Mammary epithelial cell (primary cell): ENCODE measurements at regions of chr7 and their contacts with region 1.

Region 1: GRCh38 chr7:105230486-105230885 is 158.2 kb downstream of the SRPK2 start:
- DNase-seq: peak; percentile 70
- H3K4me3 ChIP-seq: peak overlapping the region in 1 of 3 experiments; percentile 15
- H3K27ac ChIP-seq: peak overlapping the region; percentile 92
- H3K4me1 ChIP-seq: peaks cover 38% of the 10 kb centered on the region
- H3K27me3 ChIP-seq: no peaks in the 10 kb centered on the region
- CTCF ChIP-seq: no peak

Region 2: GRCh38 chr7:105180002-105180401 is 50.5 kb before region 1 on chr7:
- CTCF ChIA-PET with region 1: interaction called, 3 read pairs
- dilution Hi-C with region 1: no loop called
- in situ Hi-C with region 1: loop called in 1 of 2 experiments (anchors 5 kb)
- intact Hi-C with region 1: loop called (anchors 1 kb)
- DNase-seq: no peak
- H3K4me3 ChIP-seq: no peak overlapping the region
- H3K27ac ChIP-seq: no peak overlapping the region
- H3K4me1 ChIP-seq: peaks cover 6% of the 10 kb centered on the region
- H3K27me3 ChIP-seq: no peaks in the 10 kb centered on the region
- CTCF ChIP-seq: no peak

Region 3: DNA sequence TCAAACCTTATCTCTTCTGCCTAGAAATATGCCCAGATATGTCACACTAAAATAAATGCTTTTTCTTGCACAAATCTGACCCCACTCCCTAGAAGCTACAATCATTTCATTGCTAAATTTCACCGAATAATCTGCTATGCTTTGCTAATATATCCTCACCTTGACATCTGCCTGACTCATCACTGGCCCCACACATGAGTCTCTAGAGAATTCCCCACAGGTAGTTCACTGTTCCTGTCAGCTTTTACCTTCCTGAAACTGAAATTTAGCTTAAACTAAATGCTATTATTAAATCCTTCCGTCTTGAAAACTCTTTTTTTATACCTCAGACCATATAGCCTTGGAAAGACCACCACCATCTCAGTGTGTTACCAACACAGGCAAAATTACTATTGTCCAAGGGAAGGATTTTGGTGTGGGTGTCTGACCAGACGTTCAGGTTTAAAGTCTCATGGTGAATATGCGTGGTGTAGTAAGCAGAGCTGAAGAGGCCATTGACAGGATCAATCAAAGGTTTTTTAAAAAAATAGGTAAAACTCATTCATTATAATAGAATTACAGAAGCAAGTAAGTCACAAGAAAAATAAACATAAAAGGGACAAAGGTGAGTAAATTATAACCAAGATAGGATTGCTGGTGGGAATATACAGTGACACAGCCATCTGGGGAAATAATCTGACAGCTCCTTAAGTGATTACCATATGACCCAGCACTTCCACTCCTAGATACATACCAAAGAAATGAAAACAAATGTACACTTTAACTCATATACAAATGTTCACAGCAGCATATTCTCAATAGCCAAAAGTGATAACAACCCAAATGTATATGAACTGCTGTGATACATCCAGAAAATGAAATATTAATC is 43.0 kb before region 1 on chr7:
- CTCF ChIA-PET with region 1: interaction called, 3 read pairs
- dilution Hi-C with region 1: no loop called
- in situ Hi-C with region 1: loop called in 1 of 2 experiments (anchors 5 kb)
- intact Hi-C with region 1: loop called (anchors 1 kb)
- DNase-seq: peak; percentile 72
- H3K4me3 ChIP-seq: no peak overlapping the region
- H3K27ac ChIP-seq: peak overlapping the region; percentile 99
- H3K4me1 ChIP-seq: peaks cover 44% of the 10 kb centered on the region
- H3K27me3 ChIP-seq: no peaks in the 10 kb centered on the region
- CTCF ChIP-seq: no peak

Region 4: GRCh38 chr7:105268511-105269392 is 38.3 kb after region 1 on chr7:
- CTCF ChIA-PET with region 1: no interaction called
- dilution Hi-C with region 1: no loop called
- in situ Hi-C with region 1: no loop called
- intact Hi-C with region 1: loop called (anchors 2 kb)
- DNase-seq: peak; percentile 62
- H3K4me3 ChIP-seq: peak overlapping the region; percentile 67 to 79 (median 69)
- H3K27ac ChIP-seq: peak overlapping the region; percentile 94
- H3K4me1 ChIP-seq: no peaks in the 10 kb centered on the region
- H3K27me3 ChIP-seq: no peaks in the 10 kb centered on the region
- CTCF ChIP-seq: no peak